PC-9 (cell line): ENCODE measurements at regions of chr3 and their contacts with region 1.

Region 1: DNA sequence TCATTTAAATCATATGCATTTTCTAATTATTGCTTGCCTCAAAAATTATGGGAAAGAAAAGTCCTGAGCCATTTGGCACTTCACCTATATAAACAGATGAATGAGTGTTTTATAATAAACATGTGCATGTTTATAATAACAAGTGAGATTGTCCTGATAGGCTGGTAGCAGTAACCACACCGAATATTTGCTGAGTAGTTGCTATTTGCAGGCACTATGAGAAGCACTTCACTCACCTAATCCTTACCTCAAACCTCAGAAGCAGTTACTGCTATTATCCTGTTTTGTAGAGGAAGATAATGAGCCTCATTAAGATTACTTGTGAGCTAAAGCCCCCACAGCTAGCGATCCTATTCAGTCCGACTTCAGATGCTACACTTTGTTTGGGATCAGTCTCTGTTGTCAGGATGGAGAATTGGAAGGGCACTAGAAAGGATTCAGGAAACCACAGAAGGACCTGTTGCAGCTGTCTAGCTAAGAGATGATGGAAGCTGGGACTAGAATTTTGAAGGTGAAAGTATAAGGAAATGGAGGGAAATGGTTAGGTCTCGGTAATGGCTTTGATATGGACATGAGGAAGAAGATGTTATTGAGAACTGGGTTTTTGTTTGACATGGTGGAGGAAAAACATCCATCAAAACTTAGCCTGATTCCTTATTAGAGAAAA is 28.4 kb upstream of the MAGI1 start:
- DNase-seq: no peak
- H3K4me3 ChIP-seq: peak overlapping the region; percentile 62; the same call in 1 of the 2 replicates
- H3K27ac ChIP-seq: no peak overlapping the region
- H3K4me1 ChIP-seq: peaks cover 5% of the 10 kb centered on the region
- H3K27me3 ChIP-seq: no peaks in the 10 kb centered on the region
- CTCF ChIP-seq: no peak

Region 2: GRCh38 chr3:65742914-65743313 is 324.2 kb before region 1 on chr3:
- CTCF ChIA-PET with region 1: no interaction called
- POLR2A ChIA-PET with region 1: no interaction called
- intact Hi-C with region 1: no loop called
- DNase-seq: no peak
- H3K4me3 ChIP-seq: no peak overlapping the region
- H3K27ac ChIP-seq: no peak overlapping the region
- H3K4me1 ChIP-seq: no peaks in the 10 kb centered on the region
- H3K27me3 ChIP-seq: no peaks in the 10 kb centered on the region
- CTCF ChIP-seq: no peak

Region 3: DNA sequence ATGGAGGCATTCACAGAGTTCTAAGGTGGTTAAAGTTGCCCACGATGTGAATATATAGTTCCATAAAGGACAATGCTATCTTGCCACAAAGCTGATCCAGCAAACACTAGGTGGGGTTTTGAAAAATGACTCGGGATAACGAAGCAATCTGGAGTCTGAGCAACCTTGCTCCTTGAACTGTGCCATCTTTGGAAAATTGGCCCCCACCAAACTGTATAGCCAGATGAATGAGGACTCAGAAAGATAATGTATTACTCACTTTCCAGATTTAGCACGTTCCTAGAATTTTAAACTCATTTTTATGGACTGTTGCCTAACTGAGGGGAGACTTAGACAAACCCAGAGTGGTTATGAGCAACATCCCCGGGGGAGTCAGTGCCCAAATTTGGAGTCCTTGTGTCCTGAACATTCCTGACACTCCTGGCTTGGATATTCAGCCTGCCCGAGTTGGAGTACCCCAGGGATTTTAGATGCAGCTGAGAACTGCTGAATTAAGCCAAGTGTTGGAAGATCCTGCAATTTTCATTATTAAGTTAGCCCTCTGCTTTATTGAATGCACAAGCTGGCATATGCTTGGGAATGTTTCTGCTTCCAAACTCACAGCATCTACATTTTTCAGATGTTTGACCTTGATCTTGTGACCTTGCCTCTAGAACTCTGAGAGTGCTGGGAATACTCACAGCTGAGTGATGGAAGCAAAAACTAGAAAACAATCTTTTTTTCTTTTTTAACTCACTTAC is 19.6 kb before region 1 on chr3:
- CTCF ChIA-PET with region 1: interaction called, 15 read pairs
- POLR2A ChIA-PET with region 1: no interaction called
- intact Hi-C with region 1: no loop called
- DNase-seq: no peak
- H3K4me3 ChIP-seq: no peak overlapping the region
- H3K27ac ChIP-seq: no peak overlapping the region
- H3K4me1 ChIP-seq: peaks cover 2% of the 10 kb centered on the region
- H3K27me3 ChIP-seq: no peaks in the 10 kb centered on the region
- CTCF ChIP-seq: no peak